Gastrocnemius medialis (tissue), 4 donors: ENCODE measurements at regions of chr21 and their contacts with region 1.

Region 1: DNA sequence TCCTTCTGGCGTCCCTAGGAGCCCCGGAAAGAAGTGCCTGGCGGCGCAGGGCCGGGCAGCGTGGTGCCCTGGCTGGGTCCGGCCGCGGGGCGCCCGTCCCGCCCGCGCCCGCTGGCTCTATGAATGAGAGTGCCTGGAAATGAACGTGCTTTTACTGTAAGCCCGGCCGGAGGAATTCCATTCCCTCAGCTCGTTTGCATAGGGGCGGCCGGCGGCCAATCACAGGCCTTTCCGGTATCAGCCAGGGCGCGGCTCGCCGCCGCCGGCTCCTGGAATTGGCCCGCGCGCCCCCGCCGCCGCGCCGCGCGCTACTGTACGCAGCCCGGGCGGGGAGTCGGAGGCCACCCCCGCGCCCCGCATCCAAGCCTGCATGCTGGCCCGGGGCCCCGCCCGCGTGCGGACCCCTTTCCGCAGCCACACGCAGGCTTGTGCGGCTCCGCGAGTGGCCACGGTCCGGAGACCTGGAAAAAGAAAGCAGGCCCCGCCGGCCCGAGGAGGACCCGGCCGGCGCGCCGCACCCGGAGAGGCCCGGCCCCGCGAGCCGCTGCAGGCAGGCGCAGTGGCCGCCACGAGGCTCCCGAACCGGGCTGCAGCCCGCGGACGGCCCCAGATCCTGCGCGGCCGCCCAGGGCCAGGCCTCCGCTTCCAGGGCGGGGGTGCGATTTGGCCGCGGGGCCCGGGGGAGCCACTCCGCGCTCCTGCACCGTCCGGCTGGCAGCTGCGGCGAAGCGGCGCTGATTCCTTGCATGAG is 160.4 kb downstream of the RUNX1 start:
- DNase-seq: peak; percentile 93 to 95
- ATAC-seq: peak; percentile 74 to 78
- H3K4me3 ChIP-seq: peak overlapping the region; percentile 69 to 95 (median 72)
- H3K27ac ChIP-seq: peak overlapping the region; percentile 76 to 91 (median 82)
- H3K4me1 ChIP-seq: peaks cover 12 to 30% of the 10 kb centered on the region in 2 donors
- H3K27me3 ChIP-seq: peaks cover 24 to 51% (median 51%) of the 10 kb centered on the region in 3 donors
- CTCF ChIP-seq: peak in 3 of 5 experiments; percentile 9 to 11 (median 10)
- POLR2A ChIP-seq: peak; percentile 94 to 97

Region 2: DNA sequence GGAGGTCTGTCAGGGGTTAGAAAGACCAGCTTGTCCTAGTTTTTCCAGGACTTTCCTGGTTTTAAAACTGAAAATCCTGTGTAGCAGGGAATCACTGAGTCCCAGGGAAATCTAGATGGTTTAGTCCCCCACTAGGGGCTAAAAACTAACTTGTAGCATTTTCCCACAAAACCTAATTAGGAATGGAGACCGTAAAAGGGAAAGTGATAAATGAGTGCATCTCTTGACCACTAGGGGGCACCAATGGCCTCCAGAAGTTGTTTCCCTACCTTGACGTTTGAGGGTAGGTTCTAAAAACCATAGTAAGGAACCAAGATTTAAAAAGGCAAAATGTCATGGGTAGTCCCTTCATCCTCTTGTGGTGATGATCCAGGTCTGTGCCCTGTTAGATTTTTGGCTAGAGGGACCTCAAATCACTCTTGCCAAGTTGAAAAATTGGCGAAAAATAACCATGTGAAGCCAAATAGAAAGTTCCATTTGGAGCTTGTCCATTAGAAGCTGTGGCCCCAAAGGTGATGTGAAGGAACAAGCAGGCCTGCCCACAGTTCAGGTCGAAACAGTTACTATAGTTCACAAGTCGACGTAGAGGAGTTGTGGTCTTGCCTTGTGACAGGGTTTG is 195.4 kb before region 1 on chr21:
- in situ Hi-C with region 1: loop called in 1 of 4 experiments (anchors 10 kb)
- intact Hi-C with region 1: loop called (anchors 2 kb)
- DNase-seq: peak in 1 of 2 donors; percentile 38
- ATAC-seq: peak; percentile 29 to 43
- H3K4me3 ChIP-seq: no peak overlapping the region
- H3K27ac ChIP-seq: no peak overlapping the region
- H3K4me1 ChIP-seq: peaks cover 14 to 24% of the 10 kb centered on the region in 2 donors
- H3K27me3 ChIP-seq: no peaks in the 10 kb centered on the region
- CTCF ChIP-seq: peak; percentile 56 to 84 (median 75)
- POLR2A ChIP-seq: no peak

Region 3: GRCh38 chr21:34795175-34795547 is 93.6 kb before region 1 on chr21:
- in situ Hi-C with region 1: loop called in 2 of 4 experiments (anchors 10 kb)
- intact Hi-C with region 1: loop called (anchors 1 kb)
- DNase-seq: peak in 1 of 2 donors; percentile 49
- ATAC-seq: peak; percentile 77 to 80
- H3K4me3 ChIP-seq: peak overlapping the region in 1 of 4 donors; percentile 9
- H3K27ac ChIP-seq: peak overlapping the region; percentile 78 to 88 (median 84)
- H3K4me1 ChIP-seq: peaks cover 31 to 42% of the 10 kb centered on the region in 2 donors
- H3K27me3 ChIP-seq: no peaks in the 10 kb centered on the region
- CTCF ChIP-seq: peak in 4 of 5 experiments; percentile 18 to 30 (median 24)
- POLR2A ChIP-seq: no peak

Region 4: DNA sequence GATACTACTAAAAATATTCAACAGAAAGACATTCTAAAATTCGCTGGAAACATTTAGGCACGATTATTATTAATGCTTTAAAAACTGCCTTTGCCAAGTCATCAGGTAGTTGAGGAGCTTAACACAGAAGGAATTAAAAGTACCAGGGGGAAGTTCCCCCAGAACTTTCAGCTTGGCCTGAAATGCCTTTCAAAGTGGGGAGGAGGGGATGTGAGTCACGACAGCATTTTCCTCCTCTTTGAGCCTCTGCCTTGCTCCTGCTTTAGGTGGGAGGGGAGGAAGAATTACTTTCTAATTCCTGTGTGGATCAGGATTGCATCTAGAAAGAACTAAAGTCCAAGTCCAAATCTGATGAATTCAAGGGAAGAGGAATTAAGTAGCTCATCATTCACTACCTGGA is 36.3 kb before region 1 on chr21:
- in situ Hi-C with region 1: no loop called
- intact Hi-C with region 1: no loop called
- DNase-seq: no peak
- ATAC-seq: no peak
- H3K4me3 ChIP-seq: no peak overlapping the region
- H3K27ac ChIP-seq: peak overlapping the region in 1 of 4 donors; percentile 44
- H3K4me1 ChIP-seq: peaks cover 7% of the 10 kb centered on the region in 2 donors
- H3K27me3 ChIP-seq: no peaks in the 10 kb centered on the region
- CTCF ChIP-seq: no peak
- POLR2A ChIP-seq: no peak

Region 5: DNA sequence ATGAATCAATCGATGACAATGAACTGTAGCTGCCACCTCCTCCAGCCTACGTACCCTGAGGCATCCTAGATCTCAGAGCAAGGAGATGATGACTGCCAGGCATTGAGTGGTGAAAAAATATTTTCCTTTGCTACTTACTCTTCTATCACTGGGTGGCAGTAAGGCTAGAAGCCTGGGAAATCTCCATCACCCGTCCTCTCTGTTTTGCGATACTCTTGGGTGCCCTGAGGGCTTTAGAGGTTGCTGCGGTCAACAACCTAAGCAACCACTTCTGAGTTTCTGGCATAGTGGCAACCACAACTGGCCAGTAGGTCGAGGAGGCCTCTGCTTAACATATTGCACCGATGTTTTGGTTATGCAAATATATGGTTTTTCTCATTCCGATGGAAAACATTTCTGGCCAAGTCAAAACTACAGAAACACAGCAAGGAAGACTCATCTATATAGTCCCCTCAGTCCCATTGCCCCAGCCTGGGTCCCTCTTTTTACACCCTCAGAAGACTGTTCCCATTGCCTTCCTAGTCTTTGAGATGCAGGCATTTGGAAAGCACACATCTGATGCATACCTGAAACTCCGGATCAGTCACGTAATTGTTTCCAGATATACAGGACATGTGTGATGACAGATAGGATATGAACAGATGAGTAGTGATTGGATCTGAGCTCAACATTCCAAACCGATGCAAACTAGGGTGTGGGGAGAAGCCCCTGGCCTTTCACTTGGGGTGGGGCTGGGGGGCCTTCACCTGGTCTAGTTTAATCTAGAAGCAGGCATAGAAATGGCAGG is 23.6 kb after region 1 on chr21:
- in situ Hi-C with region 1: no loop called
- intact Hi-C with region 1: no loop called
- DNase-seq: no peak
- ATAC-seq: no peak
- H3K4me3 ChIP-seq: no peak overlapping the region
- H3K27ac ChIP-seq: no peak overlapping the region
- H3K4me1 ChIP-seq: no peaks in the 10 kb centered on the region
- H3K27me3 ChIP-seq: no peaks in the 10 kb centered on the region
- CTCF ChIP-seq: no peak
- POLR2A ChIP-seq: no peak

Region 6: DNA sequence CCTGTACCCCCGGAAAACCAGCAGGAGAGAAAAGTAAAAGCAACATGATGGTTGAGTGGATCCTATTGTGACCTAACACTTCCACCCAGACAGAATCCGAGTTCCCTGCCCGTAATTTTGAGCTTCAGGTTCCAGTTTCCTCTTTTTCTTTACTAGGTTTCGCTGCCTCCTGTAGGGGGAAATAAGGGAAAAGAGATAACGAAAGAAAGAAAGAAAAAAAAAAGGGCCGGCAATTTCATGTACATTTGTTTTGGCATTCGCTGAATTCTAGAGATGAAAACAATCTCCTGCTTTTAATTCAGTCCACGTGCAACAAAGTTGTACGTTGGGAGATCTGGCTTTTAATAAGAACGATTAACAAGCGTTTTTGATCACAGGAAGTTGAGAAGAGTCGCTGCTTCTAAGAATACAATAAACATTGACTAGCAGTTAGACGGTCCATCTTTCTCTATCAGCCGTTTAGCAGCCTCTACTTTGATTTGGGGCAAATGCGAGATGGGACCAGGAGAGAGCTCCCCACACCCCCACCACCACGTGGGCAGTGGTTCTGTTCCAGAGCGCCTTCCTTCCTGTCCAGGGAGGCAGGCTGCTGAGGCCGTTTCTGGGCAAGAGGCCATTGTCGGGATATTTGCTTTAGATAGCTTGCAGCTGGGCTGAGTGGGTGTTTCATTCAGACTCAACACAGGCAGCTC is 316.3 kb after region 1 on chr21:
- in situ Hi-C with region 1: no loop called
- intact Hi-C with region 1: loop called (anchors 10 kb)
- DNase-seq: peak in 1 of 2 donors; percentile 49
- ATAC-seq: no peak
- H3K4me3 ChIP-seq: peak overlapping the region in 2 of 4 donors; percentile 8 to 17
- H3K27ac ChIP-seq: peak overlapping the region; percentile 75 to 90 (median 82)
- H3K4me1 ChIP-seq: peaks cover 58 to 82% of the 10 kb centered on the region in 2 donors
- H3K27me3 ChIP-seq: no peaks in the 10 kb centered on the region
- CTCF ChIP-seq: no peak
- POLR2A ChIP-seq: no peak

Region 7: GRCh38 chr21:35616090-35616489 is 727.3 kb after region 1 on chr21:
- in situ Hi-C with region 1: no loop called
- intact Hi-C with region 1: loop called (anchors 5 kb)
- DNase-seq: no peak
- ATAC-seq: no peak
- H3K4me3 ChIP-seq: no peak overlapping the region
- H3K27ac ChIP-seq: no peak overlapping the region
- H3K4me1 ChIP-seq: no peaks in the 10 kb centered on the region
- H3K27me3 ChIP-seq: no peaks in the 10 kb centered on the region
- CTCF ChIP-seq: peak in 2 of 5 experiments; percentile 18 to 34
- POLR2A ChIP-seq: no peak

Region 8: DNA sequence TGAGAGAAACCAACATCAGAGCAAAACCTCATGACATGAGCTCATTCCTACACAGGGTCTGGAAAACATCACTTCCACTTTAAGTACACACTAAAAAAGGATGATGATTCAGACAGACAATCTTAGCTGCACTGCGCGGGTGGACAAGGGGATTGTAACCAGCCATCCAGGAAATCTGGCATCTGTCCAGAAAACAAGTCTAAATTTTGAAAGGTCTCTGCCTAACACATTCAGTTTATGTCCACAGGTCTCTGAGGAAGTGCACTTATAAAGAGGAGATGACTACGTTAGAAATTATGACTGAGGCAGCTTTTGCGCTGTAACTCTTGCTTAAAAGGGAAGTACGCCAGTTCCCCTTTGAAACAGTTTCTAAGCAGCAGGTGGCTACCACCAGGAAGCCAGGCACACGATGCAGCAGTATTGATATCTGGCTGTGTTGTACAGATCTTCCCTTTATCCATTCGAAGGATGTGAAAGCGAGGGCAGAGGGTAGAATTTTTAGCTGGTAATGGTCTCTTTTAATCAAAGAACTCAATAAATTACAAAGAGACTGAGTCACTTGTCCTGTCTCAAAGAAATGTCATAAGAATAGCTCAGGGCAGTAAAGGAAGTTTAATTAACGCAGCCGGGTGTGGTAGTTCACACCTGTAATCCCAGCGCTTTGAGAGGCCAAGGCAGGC is 1043.6 kb after region 1 on chr21:
- in situ Hi-C with region 1: loop called in 2 of 4 experiments (anchors 10 kb)
- intact Hi-C with region 1: loop called (anchors 2 kb)
- DNase-seq: peak; percentile 62 to 69
- ATAC-seq: peak; percentile 94 to 97
- H3K4me3 ChIP-seq: peak overlapping the region in 1 of 4 donors; percentile 9
- H3K27ac ChIP-seq: peak overlapping the region; percentile 67 to 77 (median 72)
- H3K4me1 ChIP-seq: peaks cover 8 to 19% of the 10 kb centered on the region in 2 donors
- H3K27me3 ChIP-seq: no peaks in the 10 kb centered on the region
- CTCF ChIP-seq: no peak
- POLR2A ChIP-seq: peak; percentile 9 to 34